Activated CD4-positive, alpha-beta T cell treated with anti-CD3 and anti-CD28 coated beads for 36 hours (primary cell): ENCODE measurements at regions of chr20 and their contacts with region 1.

Region 1: DNA sequence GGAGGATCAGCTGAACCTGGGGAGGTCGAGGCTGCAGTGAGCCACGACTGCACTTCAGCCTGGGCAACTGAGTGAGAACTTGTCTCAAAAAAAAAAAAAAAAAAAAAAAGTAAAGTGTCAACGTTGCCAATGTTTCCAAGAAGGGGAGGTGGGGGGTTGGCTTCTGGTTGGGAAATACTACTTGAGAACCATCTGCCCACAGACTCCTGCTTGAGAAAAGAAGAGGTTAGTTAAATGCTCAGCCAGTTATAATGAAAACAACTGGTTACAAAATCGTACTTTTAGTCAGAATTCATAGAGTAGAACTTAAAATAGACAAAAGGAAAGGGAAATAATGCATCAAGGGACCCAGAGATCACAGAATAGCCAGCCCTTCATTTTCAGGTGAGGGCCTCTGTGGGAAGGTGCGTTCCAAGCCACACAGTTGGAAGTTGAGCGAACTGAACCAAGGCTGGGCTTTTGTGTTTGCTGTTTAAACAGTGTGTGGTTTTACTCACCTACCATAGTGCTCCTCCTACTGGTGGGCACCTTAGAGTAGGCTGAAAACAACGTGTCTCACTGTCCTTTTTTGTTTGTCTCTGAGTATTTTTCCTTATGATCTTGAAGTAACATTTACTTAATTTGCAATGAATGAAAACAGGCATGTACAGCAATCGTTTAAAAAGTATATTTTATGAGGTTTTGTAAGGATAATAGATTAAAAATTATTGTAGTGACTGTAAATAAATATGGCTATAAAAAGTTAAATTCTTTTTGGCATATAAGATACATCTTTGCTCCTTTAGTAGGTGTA is 200.7 kb downstream of the BCAS1 start:
- DNase-seq: peak; percentile 83
- ATAC-seq: peak; percentile 84
- H3K4me3 Mint-ChIP-seq: peak overlapping the region; percentile 18
- H3K27ac Mint-ChIP-seq: peak overlapping the region; percentile 90
- H3K4me1 Mint-ChIP-seq: peaks cover 75% of the 10 kb centered on the region
- H3K27me3 Mint-ChIP-seq: no peaks in the 10 kb centered on the region

Region 2: DNA sequence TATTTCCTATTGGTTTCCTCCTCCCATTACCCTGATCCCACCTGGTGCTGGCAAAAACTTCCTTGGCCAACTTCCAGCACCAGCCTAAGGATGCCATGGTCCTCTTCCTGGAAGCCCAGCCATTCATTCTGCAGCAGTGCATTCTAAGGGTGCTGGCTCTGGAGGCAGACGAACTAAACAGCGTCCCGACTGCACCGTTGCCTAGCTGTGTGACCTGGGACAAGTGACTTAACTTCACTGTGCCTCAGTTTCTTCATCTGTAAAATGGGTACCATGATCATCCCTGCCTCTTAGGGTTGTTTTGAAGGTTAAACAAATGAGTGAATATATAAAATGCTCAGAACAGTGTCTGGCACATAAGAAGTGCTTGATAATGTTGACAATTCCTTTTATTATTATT is 155.1 kb before region 1 on chr20:
- CTCF ChIA-PET with region 1: no interaction called
- POLR2A ChIA-PET with region 1: no interaction called
- intact Hi-C with region 1: no loop called
- DNase-seq: no peak
- ATAC-seq: no peak
- H3K4me3 Mint-ChIP-seq: no peak overlapping the region
- H3K27ac Mint-ChIP-seq: no peak overlapping the region
- H3K4me1 Mint-ChIP-seq: peaks cover 14% of the 10 kb centered on the region
- H3K27me3 Mint-ChIP-seq: no peaks in the 10 kb centered on the region

Region 3: DNA sequence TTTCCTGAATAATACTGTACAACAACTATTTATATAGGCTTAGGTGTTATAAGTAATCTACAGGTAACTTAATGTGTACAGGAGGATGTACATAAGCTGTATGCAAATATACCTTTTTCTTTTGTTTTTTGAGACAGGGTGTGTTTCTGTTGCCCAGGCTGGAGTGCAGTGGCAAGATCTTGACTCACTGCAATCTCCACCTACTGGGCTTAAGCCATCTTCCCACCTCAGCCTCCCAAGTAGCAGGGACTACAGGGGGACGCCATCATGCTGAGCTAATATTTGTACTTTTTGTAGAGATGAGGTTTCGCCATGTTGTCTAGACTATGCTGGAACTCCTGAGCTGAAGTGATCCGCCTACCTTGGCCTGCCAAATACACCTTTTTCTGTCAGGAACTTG is 84.3 kb before region 1 on chr20:
- CTCF ChIA-PET with region 1: no interaction called
- POLR2A ChIA-PET with region 1: interaction called, 10 read pairs
- intact Hi-C with region 1: no loop called
- DNase-seq: no peak
- ATAC-seq: no peak
- H3K4me3 Mint-ChIP-seq: no peak overlapping the region
- H3K27ac Mint-ChIP-seq: no peak overlapping the region
- H3K4me1 Mint-ChIP-seq: peaks cover 20% of the 10 kb centered on the region
- H3K27me3 Mint-ChIP-seq: no peaks in the 10 kb centered on the region

Region 4: DNA sequence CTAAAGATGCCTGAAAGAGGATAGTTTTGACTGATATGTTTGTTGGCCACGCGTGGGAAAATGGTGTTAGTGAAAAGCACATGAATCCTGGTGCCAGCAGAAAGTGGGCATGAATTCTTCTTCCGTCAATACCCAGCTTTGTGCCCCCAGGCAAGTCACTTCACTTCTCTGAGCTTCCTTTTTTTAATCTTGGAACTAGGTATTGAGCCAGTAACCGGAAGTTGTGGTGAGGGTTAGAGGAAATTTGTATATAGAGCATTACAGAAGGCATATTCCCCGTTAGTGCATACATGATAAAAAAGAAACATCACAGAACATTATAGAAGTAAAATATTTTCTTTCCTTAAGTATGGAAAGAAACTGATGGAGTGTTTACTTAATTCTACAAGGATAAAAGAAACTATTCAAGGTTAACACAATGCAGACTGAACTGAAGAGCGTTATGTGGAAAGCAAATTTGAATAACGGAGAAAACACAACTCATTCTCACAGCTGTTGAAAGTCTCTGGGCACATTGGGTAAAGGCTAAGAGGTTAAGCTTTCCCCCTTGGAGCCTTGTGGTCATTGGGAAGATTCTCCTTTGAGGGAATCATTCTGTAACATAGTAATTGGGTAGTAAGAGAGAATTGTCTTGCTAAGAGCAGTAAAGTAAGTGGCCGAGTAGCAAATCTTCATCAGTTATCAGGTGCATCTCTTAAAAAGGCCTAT is 22.4 kb before region 1 on chr20:
- CTCF ChIA-PET with region 1: interaction called, 18 read pairs
- POLR2A ChIA-PET with region 1: interaction called, 8 read pairs
- intact Hi-C with region 1: loop called (anchors 1 to 2 kb)
- DNase-seq: peak; percentile 16
- ATAC-seq: no peak
- H3K4me3 Mint-ChIP-seq: peak overlapping the region; percentile 41
- H3K27ac Mint-ChIP-seq: peak overlapping the region; percentile 69
- H3K4me1 Mint-ChIP-seq: peaks cover 64% of the 10 kb centered on the region
- H3K27me3 Mint-ChIP-seq: no peaks in the 10 kb centered on the region

Region 5: GRCh38 chr20:53891306-53891944 is 21.8 kb after region 1 on chr20:
- CTCF ChIA-PET with region 1: interaction called, 3 read pairs
- POLR2A ChIA-PET with region 1: no interaction called
- intact Hi-C with region 1: loop called (anchors 1 kb)
- DNase-seq: no peak
- ATAC-seq: no peak
- H3K4me3 Mint-ChIP-seq: no peak overlapping the region
- H3K27ac Mint-ChIP-seq: no peak overlapping the region
- H3K4me1 Mint-ChIP-seq: peaks cover 44% of the 10 kb centered on the region
- H3K27me3 Mint-ChIP-seq: no peaks in the 10 kb centered on the region